ENCODE measurements at regions of chr1 and their contacts with region 1.

Region 1: DNA sequence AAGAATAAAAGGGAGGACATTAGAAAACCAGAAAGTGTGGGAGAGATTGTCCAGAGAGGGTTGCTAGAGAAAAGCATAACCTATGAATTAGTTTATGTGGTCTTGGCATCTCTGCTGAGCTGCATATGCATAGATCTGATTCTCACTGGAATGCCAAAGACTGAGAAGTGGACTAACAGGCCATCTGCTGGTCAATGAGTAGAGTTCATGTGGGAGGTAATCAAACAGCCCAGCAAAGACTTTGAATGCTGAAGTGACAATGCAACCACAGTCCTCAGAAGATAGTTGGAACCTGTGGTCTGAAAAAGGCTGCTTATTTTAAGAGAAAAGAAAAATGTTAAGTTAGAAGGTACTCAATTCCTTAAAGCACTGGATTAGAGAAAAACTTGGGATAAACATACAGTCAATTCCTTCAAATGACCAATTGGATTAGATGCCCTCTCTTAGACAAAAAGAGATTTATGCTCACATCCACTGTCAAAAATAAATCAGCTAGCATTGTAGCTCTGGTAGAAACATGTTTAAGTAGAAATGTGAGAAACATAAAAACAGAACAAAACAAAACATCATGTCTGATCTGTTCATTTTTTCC is 382.8 kb downstream of the AMY1C start:
- DNase-seq: peak; percentile 21 to 54 (median 40)
- H3K4me3 ChIP-seq: no peak overlapping the region
- H3K27ac ChIP-seq: no peak overlapping the region
- H3K4me1 ChIP-seq: no peaks in the 10 kb centered on the region
- H3K27me3 ChIP-seq: no peaks in the 10 kb centered on the region

Region 2: GRCh38 chr1:103948526-103948925 is 184.0 kb before region 1 on chr1:
- CTCF ChIA-PET with region 1: interaction called, 17 read pairs
- POLR2A ChIA-PET with region 1: no interaction called
- DNase-seq: peak; percentile 13 to 41 (median 28)
- H3K4me3 ChIP-seq: no peak overlapping the region
- H3K27ac ChIP-seq: no peak overlapping the region
- H3K4me1 ChIP-seq: no peaks in the 10 kb centered on the region
- H3K27me3 ChIP-seq: no peaks in the 10 kb centered on the region

Region 3: DNA sequence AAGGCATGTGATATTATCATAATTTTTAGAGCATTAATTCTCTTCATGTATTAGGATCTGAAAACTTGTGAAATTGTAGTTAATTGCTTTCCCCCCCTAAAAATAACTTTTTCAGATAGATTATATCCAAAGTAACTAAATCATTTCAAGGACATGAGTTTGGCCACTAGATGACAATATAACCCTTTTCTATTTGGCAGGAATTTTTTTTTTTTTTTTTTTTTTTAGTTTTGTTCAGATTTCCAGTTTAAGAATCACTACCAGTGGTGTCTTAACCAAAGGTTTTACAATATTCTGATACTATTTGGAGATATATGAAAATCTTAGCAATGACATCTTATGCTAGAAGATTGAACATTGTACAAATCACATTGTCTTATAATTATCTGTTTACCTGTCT is 12.0 kb before region 1 on chr1:
- CTCF ChIA-PET with region 1: interaction called, 10 read pairs
- POLR2A ChIA-PET with region 1: no interaction called
- DNase-seq: no peak
- H3K4me3 ChIP-seq: no peak overlapping the region
- H3K27ac ChIP-seq: no peak overlapping the region
- H3K4me1 ChIP-seq: peaks cover 0 to 9% (median 0%) of the 10 kb centered on the region in 4 experiments
- H3K27me3 ChIP-seq: no peaks in the 10 kb centered on the region

Region 4: GRCh38 chr1:104156738-104157137 is 24.3 kb after region 1 on chr1:
- CTCF ChIA-PET with region 1: no interaction called
- POLR2A ChIA-PET with region 1: no interaction called
- DNase-seq: no peak
- H3K4me3 ChIP-seq: no peak overlapping the region
- H3K27ac ChIP-seq: no peak overlapping the region
- H3K4me1 ChIP-seq: no peaks in the 10 kb centered on the region
- H3K27me3 ChIP-seq: no peaks in the 10 kb centered on the region

Region 5: DNA sequence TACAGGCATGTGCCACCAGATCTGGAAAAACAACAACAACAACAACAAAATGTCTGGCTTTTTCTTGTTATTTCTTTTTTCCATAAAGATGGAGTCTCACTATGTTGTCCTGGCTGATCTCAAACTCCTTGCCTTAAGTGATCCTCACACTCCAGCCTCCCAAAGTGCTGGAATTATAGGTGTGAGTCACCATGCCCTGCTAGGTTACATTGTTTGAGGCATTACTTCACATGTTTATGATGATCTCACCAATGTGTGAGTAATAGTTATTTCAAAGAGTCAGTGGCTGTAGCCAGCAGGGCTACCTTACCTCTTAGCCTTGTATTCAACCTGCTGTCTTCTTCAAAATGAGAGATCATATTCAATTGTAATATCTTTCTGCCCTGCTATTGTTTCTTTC is 62.9 kb after region 1 on chr1:
- CTCF ChIA-PET with region 1: no interaction called
- POLR2A ChIA-PET with region 1: no interaction called
- DNase-seq: no peak
- H3K4me3 ChIP-seq: no peak overlapping the region
- H3K27ac ChIP-seq: no peak overlapping the region
- H3K4me1 ChIP-seq: no peaks in the 10 kb centered on the region
- H3K27me3 ChIP-seq: no peaks in the 10 kb centered on the region

Region 6: DNA sequence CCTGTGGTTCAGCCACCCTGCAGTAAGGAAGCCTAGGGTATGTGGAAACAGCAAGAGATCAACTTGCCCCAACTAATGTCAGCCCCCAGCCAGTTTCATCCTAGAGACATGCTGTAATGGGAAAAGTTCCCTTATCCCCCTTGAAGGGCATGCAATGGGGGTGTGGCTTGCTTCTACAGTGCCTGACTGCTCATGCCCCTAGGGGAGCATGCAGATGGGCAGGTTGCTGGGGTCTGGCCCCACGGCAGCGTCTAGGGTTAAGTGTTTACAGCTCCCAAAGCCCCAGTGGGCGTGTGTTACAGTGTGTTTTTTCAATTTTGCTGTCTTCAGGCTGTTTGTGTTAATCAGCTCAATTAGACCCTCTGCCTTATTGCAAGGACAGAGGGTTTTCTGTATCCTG is 723.1 kb after region 1 on chr1:
- CTCF ChIA-PET with region 1: no interaction called
- POLR2A ChIA-PET with region 1: no interaction called
- DNase-seq: no peak
- H3K4me3 ChIP-seq: no peak overlapping the region
- H3K27ac ChIP-seq: no peak overlapping the region
- H3K4me1 ChIP-seq: no peaks in the 10 kb centered on the region
- H3K27me3 ChIP-seq: no peaks in the 10 kb centered on the region

Measured in common myeloid progenitor, CD34-positive (primary cell).